ENCODE measurements at regions of chr10 and their contacts with region 1.

Region 1: GRCh38 chr10:122213766-122214165 is 57.3 kb upstream of the BTBD16 start:
- DNase-seq: peak in 1 of 5 donors; percentile 35
- ATAC-seq: peak in 3 of 4 donors; percentile 53 to 75 (median 72)
- H3K4me3 ChIP-seq: no peak overlapping the region
- H3K27ac ChIP-seq: no peak overlapping the region
- H3K4me1 ChIP-seq: peaks cover 0 to 9% (median 0%) of the 10 kb centered on the region in 12 donors
- H3K27me3 ChIP-seq: no peaks in the 10 kb centered on the region
- CTCF ChIP-seq: peak in 7 of 12 donors; percentile 10 to 45 (median 14)
- POLR2A ChIP-seq: no peak

Region 2: DNA sequence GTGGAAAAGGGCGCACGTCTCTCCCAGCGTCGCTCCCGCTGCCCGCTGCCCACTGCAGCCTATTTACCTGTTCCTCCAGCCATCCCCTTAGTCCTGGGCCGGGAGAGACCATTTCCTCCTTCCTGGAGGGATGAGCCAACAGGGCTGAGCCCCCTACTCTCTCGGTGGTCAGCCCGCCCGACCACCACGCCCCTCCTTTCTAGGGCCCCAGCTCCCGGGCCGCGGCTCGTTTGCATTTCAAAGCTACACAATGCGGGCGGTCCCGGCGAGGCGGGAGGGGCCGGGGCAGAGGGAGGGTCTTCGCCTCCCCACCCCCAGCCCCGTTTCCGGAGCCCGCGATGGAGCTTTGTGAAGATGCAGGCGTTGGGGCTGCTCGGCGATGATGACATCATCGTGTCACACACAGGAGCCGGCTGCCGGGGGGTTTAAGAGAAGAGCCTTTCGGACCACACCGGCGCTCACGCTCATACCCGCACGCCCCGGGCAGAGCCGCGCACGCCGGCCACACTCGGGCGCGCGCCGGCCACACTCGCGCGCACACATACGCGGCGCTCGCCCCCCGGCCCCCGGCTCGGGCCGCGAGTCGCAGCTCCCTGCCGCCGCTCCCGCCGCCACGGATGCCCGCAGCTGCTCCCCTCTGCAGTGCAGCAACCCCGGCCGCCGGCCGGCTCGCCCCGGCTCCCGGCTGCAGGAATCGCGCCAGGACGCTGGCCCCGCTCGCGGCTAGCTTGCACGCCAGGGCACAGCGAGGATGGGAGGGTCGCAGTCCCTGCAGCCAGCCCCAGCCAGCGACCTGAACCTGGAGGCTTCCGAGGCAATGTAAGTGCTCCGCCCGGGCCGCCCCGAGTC is 50.4 kb before region 1 on chr10:
- intact Hi-C with region 1: loop called in 3 of 10 experiments (anchors 5 to 10 kb)
- DNase-seq: no peak
- ATAC-seq: no peak
- H3K4me3 ChIP-seq: peak overlapping the region in 10 of 12 donors; percentile 37 to 58 (median 52)
- H3K27ac ChIP-seq: peak overlapping the region in 4 of 12 donors; percentile 21 to 53 (median 40)
- H3K4me1 ChIP-seq: peaks cover 0 to 65% (median 34%) of the 10 kb centered on the region in 12 donors
- H3K27me3 ChIP-seq: peaks cover 0 to 22% (median 0%) of the 10 kb centered on the region in 9 donors
- CTCF ChIP-seq: no peak
- POLR2A ChIP-seq: no peak

Region 3: GRCh38 chr10:122176232-122177213 is 37.2 kb before region 1 on chr10:
- intact Hi-C with region 1: no loop called
- DNase-seq: no peak
- ATAC-seq: no peak
- H3K4me3 ChIP-seq: no peak overlapping the region
- H3K27ac ChIP-seq: no peak overlapping the region
- H3K4me1 ChIP-seq: peaks cover 10 to 44% (median 30%) of the 10 kb centered on the region in 12 donors
- H3K27me3 ChIP-seq: no peaks in the 10 kb centered on the region
- CTCF ChIP-seq: no peak
- POLR2A ChIP-seq: no peak